ENCODE measurements at regions of chr16 and their contacts with region 1.

Region 1: GRCh38 chr16:88569985-88570690 is at the start of gene ZC3H18:
- DNase-seq: peak; percentile 96 to 100 (median 99)
- ATAC-seq: peak; percentile 95
- H3K4me3 ChIP-seq: peak within 1 kb of the TSS; percentile 67 to 76
- H3K4me3 Mint-ChIP-seq: peak within 1 kb of the TSS; percentile 87
- H3K27ac ChIP-seq: peak within 1 kb of the TSS; percentile 55 to 85
- H3K27ac Mint-ChIP-seq: peak within 1 kb of the TSS; percentile 91
- H3K4me1 ChIP-seq: peaks cover 20% of the 10 kb centered on the region
- H3K4me1 Mint-ChIP-seq: peaks cover 34% of the 10 kb centered on the region
- H3K27me3 ChIP-seq: no peaks in the 10 kb centered on the region
- H3K27me3 Mint-ChIP-seq: no peaks in the 10 kb centered on the region
- CTCF ChIP-seq: no peak
- total RNA-seq, gene ZC3H18: 140 to 149 TPM

Region 2: DNA sequence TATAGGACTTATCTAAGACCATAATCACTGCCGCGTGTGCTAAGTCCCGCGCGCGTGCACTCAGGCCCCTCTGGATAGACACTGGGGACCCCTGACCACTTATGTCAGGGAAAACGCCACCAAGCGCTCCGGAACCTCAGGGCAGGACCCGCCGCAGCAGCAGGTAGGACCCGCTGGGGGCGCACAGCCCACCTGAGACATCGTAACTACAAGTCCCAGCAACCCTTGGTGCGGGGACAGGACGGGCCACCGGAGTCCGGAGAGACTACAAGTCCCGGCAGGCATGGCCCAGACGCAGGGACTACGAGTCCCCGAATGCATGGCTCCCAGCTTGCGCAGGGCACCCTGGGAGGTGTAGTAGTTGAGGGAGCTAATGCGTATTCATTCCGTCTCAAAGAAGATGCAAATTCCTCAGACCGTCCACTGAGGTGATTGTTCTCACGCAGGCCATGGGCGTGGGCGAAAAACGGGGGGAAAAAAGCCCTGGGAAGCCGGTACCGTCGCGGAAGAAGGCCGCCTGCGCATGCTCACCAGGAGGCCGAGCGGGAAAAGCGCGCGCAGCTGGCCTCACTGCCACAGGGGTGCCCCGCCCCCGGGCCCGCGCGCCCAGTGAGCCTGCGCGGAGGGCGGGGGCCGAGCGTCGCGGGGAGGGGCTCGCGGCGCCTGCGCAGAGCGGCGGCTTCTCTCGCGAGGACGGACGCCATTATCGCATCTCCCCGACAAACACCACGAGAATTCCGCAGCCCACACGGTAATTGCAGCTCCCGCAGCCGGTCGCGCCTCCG is 619.2 kb before region 1 on chr16 and contains the start of gene BANP:
- CTCF ChIA-PET with region 1: no interaction called
- POLR2A ChIA-PET with region 1: no interaction called
- intact Hi-C with region 1: loop called (anchors 1 to 2 kb)
- DNase-seq: peak; percentile 92 to 100 (median 96)
- ATAC-seq: peak; percentile 93
- H3K4me3 ChIP-seq: peak within 1 kb of the TSS; percentile 72 to 98
- H3K4me3 Mint-ChIP-seq: peak within 1 kb of the TSS; percentile 97
- H3K27ac ChIP-seq: peak within 1 kb of the TSS; percentile 88 to 96
- H3K27ac Mint-ChIP-seq: peak within 1 kb of the TSS; percentile 99
- H3K4me1 ChIP-seq: peaks cover 37% of the 10 kb centered on the region
- H3K4me1 Mint-ChIP-seq: peaks cover 42% of the 10 kb centered on the region
- H3K27me3 ChIP-seq: no peaks in the 10 kb centered on the region
- H3K27me3 Mint-ChIP-seq: no peaks in the 10 kb centered on the region
- CTCF ChIP-seq: peak; percentile 41
- total RNA-seq, gene BANP: 55.3 to 60.6 TPM

Region 3: DNA sequence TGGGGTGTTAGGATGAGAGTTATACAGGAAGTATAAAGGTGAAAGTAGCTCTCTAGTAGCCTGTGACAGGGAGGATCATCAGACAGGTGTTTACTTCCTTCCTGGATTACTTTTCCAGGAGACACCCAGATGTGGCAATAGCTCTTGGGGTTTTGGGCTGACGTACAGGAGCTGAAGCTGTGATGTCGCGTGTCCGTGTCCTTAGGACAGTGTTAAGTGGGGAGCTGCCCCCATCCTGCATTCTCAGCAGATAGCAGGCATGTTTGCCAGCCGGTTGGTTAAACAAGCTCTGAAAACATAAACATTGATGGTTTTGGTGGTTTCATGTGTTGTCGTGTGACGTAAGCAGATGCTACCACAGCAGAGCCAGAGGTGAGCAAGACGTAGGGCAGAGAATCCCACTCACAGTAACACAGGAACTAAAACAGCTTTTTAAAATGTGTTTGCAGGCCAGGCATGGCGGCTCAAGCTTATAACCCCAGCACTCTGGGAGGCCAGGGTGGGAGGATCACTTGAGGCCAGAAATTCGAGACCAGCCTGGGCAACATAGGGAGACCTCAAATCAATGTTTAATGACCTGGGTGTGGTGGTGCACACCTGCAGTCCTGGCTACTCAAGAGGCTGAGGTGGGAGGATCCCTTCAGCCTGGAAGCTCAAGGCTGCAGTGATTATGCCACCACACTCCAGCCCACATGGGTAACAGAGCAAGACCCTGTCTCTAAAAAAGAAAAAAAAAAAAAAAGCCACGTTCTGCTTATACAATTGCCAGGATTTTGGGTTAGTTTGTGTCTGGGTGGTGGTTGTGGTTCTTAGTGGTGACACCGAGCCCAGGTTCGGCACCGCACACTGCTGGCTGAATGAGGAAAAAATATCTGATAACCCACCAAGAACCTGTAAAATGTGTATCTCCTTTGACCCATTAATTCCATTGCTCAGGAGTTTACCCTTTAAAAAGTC is 50.0 kb after region 1 on chr16:
- CTCF ChIA-PET with region 1: no interaction called
- POLR2A ChIA-PET with region 1: interaction called, 14 read pairs
- intact Hi-C with region 1: loop called (anchors 2 to 5 kb)
- DNase-seq: peak; percentile 58 to 97 (median 76)
- ATAC-seq: peak; percentile 85
- H3K4me3 ChIP-seq: no peak overlapping the region
- H3K4me3 Mint-ChIP-seq: peak overlapping the region; percentile 36
- H3K27ac ChIP-seq: peak overlapping the region; percentile 69 to 89
- H3K27ac Mint-ChIP-seq: peak overlapping the region; percentile 99
- H3K4me1 ChIP-seq: peaks cover 28% of the 10 kb centered on the region
- H3K4me1 Mint-ChIP-seq: peaks cover 25% of the 10 kb centered on the region
- H3K27me3 ChIP-seq: no peaks in the 10 kb centered on the region
- H3K27me3 Mint-ChIP-seq: no peaks in the 10 kb centered on the region
- CTCF ChIP-seq: no peak

Region 4: DNA sequence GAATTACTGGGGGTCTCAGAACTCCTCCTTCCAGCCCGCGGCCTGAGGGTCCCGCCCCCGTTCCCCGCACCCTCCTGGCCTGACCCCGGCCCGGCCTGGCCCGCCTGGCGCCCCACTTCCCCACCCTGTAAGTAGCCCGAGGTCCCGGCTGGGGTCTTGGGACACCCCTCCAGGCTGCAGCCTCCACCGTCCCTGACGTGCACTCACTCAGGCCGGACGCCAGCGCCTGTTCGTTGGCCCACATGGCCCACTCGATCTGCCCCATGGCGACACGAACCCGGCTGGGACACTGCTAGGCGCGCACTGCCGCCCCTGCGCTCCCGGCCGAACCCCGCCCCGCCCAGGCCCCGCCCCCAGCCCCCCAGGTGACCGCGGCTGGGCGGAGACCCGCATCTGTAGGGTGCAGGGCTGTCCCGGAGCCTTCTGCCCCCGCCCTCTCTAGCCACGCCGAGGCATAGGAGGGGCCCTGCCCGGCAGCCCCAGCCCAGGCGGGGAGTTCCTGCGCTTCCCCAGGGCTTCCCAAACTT is 80.7 kb after region 1 on chr16 and contains the start of gene CYBA:
- CTCF ChIA-PET with region 1: no interaction called
- POLR2A ChIA-PET with region 1: interaction called, 4 read pairs
- intact Hi-C with region 1: loop called in 1 of 2 experiments (anchors 1 kb)
- DNase-seq: peak; percentile 73 to 92 (median 82)
- ATAC-seq: peak; percentile 80
- H3K4me3 ChIP-seq: peak within 1 kb of the TSS; percentile 90 to 95
- H3K4me3 Mint-ChIP-seq: peak within 1 kb of the TSS; percentile 91
- H3K27ac ChIP-seq: peak within 1 kb of the TSS; percentile 91 to 94
- H3K27ac Mint-ChIP-seq: peak within 1 kb of the TSS; percentile 94
- H3K4me1 ChIP-seq: peaks cover 33% of the 10 kb centered on the region
- H3K4me1 Mint-ChIP-seq: peaks cover 21% of the 10 kb centered on the region
- H3K27me3 ChIP-seq: no peaks in the 10 kb centered on the region
- H3K27me3 Mint-ChIP-seq: no peaks in the 10 kb centered on the region
- CTCF ChIP-seq: no peak
- total RNA-seq, gene CYBA: 312 to 320 TPM

Region 5: GRCh38 chr16:88686439-88687253 is 116.5 kb after region 1 on chr16 and contains the start of gene SNAI3:
- CTCF ChIA-PET with region 1: no interaction called
- POLR2A ChIA-PET with region 1: interaction called, 9 read pairs
- intact Hi-C with region 1: loop called in 1 of 2 experiments (anchors 2 kb)
- DNase-seq: peak; percentile 58 to 89 (median 85)
- ATAC-seq: peak; percentile 77
- H3K4me3 ChIP-seq: peak within 1 kb of the TSS; percentile 87 to 93
- H3K4me3 Mint-ChIP-seq: peak within 1 kb of the TSS; percentile 80
- H3K27ac ChIP-seq: peak within 1 kb of the TSS; percentile 59 to 63
- H3K27ac Mint-ChIP-seq: peak within 1 kb of the TSS; percentile 69
- H3K4me1 ChIP-seq: peaks cover 46% of the 10 kb centered on the region
- H3K4me1 Mint-ChIP-seq: peaks cover 50% of the 10 kb centered on the region
- H3K27me3 ChIP-seq: no peaks in the 10 kb centered on the region
- H3K27me3 Mint-ChIP-seq: no peaks in the 10 kb centered on the region
- CTCF ChIP-seq: no peak
- total RNA-seq, gene SNAI3: 3.1 to 3.4 TPM

Region 6: GRCh38 chr16:88706288-88706964 is 136.3 kb after region 1 on chr16 and contains the starts of genes CTU2 and RNF166:
- CTCF ChIA-PET with region 1: no interaction called
- POLR2A ChIA-PET with region 1: interaction called, 6 read pairs
- intact Hi-C with region 1: loop called (anchors 1 kb)
- DNase-seq: peak; percentile 79 to 97 (median 91)
- ATAC-seq: peak; percentile 55
- H3K4me3 ChIP-seq: peak within 1 kb of the TSS; percentile 80 to 89
- H3K4me3 Mint-ChIP-seq: peak within 1 kb of the TSS; percentile 90
- H3K27ac ChIP-seq: peak within 1 kb of the TSS; percentile 88 to 91
- H3K27ac Mint-ChIP-seq: peak within 1 kb of the TSS; percentile 98
- H3K4me1 ChIP-seq: peaks cover 30% of the 10 kb centered on the region
- H3K4me1 Mint-ChIP-seq: peaks cover 44% of the 10 kb centered on the region
- H3K27me3 ChIP-seq: no peaks in the 10 kb centered on the region
- H3K27me3 Mint-ChIP-seq: no peaks in the 10 kb centered on the region
- CTCF ChIP-seq: no peak
- total RNA-seq, gene CTU2: 59.5 to 60.4 TPM
- total RNA-seq, gene RNF166: 371 to 406 TPM

Region 7: GRCh38 chr16:89217388-89218191 is 647.5 kb after region 1 on chr16 and contains the start of gene ZNF778:
- CTCF ChIA-PET with region 1: interaction called, 3 read pairs
- POLR2A ChIA-PET with region 1: no interaction called
- intact Hi-C with region 1: loop called (anchors 1 to 2 kb)
- DNase-seq: peak; percentile 56 to 92 (median 80)
- ATAC-seq: peak; percentile 69
- H3K4me3 ChIP-seq: peak within 1 kb of the TSS; percentile 87 to 90
- H3K4me3 Mint-ChIP-seq: peak within 1 kb of the TSS; percentile 93
- H3K27ac ChIP-seq: peak within 1 kb of the TSS; percentile 95 to 98
- H3K27ac Mint-ChIP-seq: peak within 1 kb of the TSS; percentile 83
- H3K4me1 ChIP-seq: peaks cover 16% of the 10 kb centered on the region
- H3K4me1 Mint-ChIP-seq: peaks cover 35% of the 10 kb centered on the region
- H3K27me3 ChIP-seq: no peaks in the 10 kb centered on the region
- H3K27me3 Mint-ChIP-seq: no peaks in the 10 kb centered on the region
- CTCF ChIP-seq: no peak
- total RNA-seq, gene ZNF778: 8.4 to 8.9 TPM